ENCODE measurements at regions of chr7 and their contacts with region 1.

Region 1: DNA sequence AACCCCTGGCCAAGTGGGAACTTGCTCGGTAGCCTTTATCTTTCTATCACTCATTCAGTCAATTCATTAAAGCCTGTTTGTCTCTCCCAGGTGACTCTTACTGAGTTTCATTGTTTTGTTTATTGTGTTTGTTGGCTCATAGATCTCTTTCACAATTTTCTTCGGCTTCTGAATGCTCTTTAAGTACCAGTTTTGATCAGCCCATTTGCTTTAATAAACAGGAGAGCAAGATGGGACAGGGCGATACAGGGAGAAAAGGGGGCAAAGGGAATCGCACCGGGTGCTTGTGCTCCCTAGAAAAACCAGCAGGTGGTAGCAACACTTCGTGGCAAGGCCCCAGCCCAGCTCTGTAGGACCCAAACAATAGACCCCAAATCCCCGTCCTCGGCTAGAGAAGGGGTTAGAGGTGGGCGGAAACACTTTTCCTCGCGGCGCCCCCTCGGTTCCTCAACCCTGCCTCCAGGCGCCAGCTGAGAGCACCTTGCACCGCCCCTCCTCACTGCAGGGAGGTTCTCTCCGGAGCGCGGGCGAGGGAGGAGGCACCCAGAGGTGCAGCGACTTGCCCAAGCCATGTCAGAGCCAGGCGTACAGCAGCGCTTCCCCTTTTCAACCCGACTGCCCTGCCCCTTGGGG is 1.0 kb upstream of the EPHB6 start:
- DNase-seq: peak; percentile 82
- H3K4me3 ChIP-seq: peak overlapping the region; percentile 55 to 76 (median 66)
- H3K27ac ChIP-seq: peak overlapping the region; percentile 69 to 81 (median 71)
- H3K4me1 ChIP-seq: peaks cover 0 to 21% (median 17%) of the 10 kb centered on the region in 4 donors
- H3K27me3 ChIP-seq: no peaks in the 10 kb centered on the region
- CTCF ChIP-seq: peak; percentile 66 to 88 (median 76)
- EP300 ChIP-seq: no peak
- POLR2A ChIP-seq: no peak

Region 2: DNA sequence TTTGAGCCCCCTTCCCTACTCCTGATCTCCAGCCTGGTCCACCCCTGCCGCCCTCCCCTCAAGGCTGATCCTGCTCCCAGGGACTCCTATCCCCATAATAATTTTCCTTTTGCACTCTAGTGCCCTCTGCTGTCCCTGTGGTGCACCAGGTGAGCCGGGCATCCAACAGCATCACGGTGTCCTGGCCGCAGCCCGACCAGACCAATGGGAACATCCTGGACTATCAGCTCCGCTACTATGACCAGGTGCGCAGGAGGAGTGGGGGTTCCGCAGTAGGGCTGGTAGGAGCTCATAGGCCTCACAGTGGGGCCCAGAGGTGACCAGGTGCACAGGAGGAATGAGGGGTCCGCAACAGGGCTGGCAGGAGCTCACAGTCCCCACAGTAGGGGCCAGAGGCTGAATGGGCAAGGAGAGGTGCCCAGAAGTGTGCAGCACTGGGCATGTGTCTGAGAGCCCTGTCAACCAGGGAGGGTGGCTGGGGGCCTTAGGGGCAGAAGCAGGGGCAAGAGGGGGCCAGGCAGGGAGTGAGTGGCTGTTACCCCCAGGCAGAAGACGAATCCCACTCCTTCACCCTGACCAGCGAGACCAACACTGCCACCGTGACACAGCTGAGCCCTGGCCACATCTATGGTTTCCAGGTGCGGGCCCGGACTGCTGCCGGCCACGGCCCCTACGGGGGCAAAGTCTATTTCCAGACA is 12.7 kb after region 1 on chr7:
- intact Hi-C with region 1: loop called (anchors 1 kb)
- DNase-seq: no peak
- H3K4me3 ChIP-seq: no peak overlapping the region
- H3K27ac ChIP-seq: no peak overlapping the region
- H3K4me1 ChIP-seq: no peaks in the 10 kb centered on the region
- H3K27me3 ChIP-seq: no peaks in the 10 kb centered on the region
- CTCF ChIP-seq: peak; percentile 30 to 63 (median 49)
- EP300 ChIP-seq: no peak
- POLR2A ChIP-seq: no peak

Region 3: GRCh38 chr7:142880876-142881505 is 27.1 kb after region 1 on chr7:
- intact Hi-C with region 1: no loop called
- DNase-seq: no peak
- H3K4me3 ChIP-seq: no peak overlapping the region
- H3K27ac ChIP-seq: no peak overlapping the region
- H3K4me1 ChIP-seq: no peaks in the 10 kb centered on the region
- H3K27me3 ChIP-seq: peaks cover 0 to 6% (median 3%) of the 10 kb centered on the region in 3 donors
- CTCF ChIP-seq: peak in 2 of 4 experiments; percentile 42 to 44
- EP300 ChIP-seq: no peak
- POLR2A ChIP-seq: no peak

Region 4: GRCh38 chr7:143008007-143008901 is 154.4 kb after region 1 on chr7:
- intact Hi-C with region 1: loop called (anchors 5 kb)
- DNase-seq: peak; percentile 80
- H3K4me3 ChIP-seq: no peak overlapping the region
- H3K27ac ChIP-seq: no peak overlapping the region
- H3K4me1 ChIP-seq: peaks cover 0 to 5% (median 3%) of the 10 kb centered on the region in 4 donors
- H3K27me3 ChIP-seq: no peaks in the 10 kb centered on the region
- CTCF ChIP-seq: peak; percentile 89 to 92 (median 92)
- EP300 ChIP-seq: no peak
- POLR2A ChIP-seq: no peak

Region 5: DNA sequence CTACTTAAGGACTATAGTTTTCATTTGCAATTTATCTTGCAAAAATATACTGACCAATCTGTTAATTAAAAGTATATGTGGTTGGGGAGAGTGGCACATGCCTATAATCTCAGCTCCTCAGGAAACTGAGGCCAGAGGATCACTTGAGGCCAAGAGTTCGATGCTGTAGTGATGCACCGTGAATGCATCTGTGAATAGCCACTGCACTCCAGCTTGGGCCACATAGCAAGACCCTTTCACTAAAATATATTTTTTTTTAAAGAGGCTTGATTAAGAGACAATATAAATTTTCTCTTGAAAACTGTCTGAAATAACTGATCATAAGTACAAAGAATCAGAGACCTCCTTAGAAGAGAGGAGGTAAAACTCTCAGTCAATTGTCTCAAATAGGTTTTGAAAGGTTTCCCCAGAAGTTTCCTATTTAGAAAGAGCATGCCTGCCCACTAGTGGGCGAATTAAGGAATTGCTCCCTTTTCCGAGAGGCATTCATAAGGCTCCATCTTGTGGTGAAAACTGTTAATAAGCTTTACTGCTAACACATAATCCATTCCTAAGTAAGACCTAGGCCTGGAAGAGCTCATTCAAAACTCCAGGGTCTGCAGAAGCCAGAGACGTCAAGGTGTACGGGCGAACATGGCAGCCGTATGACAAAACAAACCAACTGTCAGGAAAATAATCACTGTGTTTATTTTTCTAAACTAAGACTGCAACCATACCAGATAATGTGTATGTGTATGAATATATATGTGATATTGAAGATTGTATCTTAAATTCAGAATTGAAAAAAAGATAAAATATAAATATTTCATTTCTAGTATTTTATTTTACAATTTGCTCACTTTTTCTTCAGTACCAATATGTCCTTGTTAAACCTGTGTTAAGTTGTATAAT is 361.2 kb after region 1 on chr7:
- intact Hi-C with region 1: loop called (anchors 5 kb)
- DNase-seq: peak; percentile 71
- H3K4me3 ChIP-seq: no peak overlapping the region
- H3K27ac ChIP-seq: peak overlapping the region in 2 of 4 donors; percentile 31 to 35
- H3K4me1 ChIP-seq: peaks cover 0 to 8% (median 3%) of the 10 kb centered on the region in 4 donors
- H3K27me3 ChIP-seq: no peaks in the 10 kb centered on the region
- CTCF ChIP-seq: peak; percentile 91 to 99 (median 97)
- EP300 ChIP-seq: no peak
- POLR2A ChIP-seq: no peak